Activated CD4-positive, alpha-beta T cell treated with anti-CD3 and anti-CD28 coated beads for 36 hours (primary cell): ENCODE measurements at regions of chr2 and their contacts with region 1.

Region 1: DNA sequence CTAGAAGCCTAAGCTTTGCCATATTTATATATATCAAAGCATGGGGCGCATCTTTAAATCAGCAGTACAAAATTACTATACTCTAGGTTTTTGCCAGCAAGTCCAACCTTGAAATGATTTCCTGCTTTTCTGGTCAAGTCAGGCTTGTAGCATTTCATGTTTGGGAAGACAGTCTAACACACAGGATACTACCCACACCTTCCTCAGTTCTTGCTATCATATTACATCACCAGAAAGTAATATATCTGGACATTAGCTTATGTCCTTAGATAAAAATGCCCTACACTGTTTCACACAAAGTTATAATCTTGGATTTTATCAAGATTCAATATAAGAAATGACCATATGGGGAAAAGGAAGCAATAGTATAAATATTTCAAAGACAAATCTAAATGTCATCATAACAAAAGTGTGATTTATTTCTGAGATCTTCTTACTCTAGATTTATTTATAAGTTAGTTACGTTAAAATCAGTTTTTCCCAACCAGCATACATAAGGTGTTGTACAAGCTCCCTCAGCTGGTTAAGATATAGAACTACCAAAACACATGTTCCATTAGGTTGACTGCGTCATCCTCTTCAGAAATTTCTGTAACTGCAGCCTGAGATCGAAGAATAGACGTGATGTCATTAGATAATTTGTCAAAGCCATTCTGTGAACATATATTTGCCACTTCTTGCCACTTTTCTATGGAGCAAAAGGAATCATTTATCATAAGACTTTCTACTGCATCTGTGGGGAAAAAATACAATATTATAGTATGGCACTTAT is 56.7 kb downstream of the CLHC1 start:
- DNase-seq: no peak
- ATAC-seq: peak; percentile 78
- H3K4me3 Mint-ChIP-seq: no peak overlapping the region
- H3K27ac Mint-ChIP-seq: no peak overlapping the region
- H3K4me1 Mint-ChIP-seq: peaks cover 8% of the 10 kb centered on the region
- H3K27me3 Mint-ChIP-seq: no peaks in the 10 kb centered on the region

Region 2: GRCh38 chr2:54665436-54665856 is 510.0 kb before region 1 on chr2:
- CTCF ChIA-PET with region 1: interaction called, 12 read pairs
- POLR2A ChIA-PET with region 1: no interaction called
- intact Hi-C with region 1: loop called (anchors 5 to 10 kb)
- DNase-seq: peak; percentile 75
- ATAC-seq: peak; percentile 92
- H3K4me3 Mint-ChIP-seq: no peak overlapping the region
- H3K27ac Mint-ChIP-seq: peak overlapping the region; percentile 80
- H3K4me1 Mint-ChIP-seq: peaks cover 3% of the 10 kb centered on the region
- H3K27me3 Mint-ChIP-seq: no peaks in the 10 kb centered on the region

Region 3: DNA sequence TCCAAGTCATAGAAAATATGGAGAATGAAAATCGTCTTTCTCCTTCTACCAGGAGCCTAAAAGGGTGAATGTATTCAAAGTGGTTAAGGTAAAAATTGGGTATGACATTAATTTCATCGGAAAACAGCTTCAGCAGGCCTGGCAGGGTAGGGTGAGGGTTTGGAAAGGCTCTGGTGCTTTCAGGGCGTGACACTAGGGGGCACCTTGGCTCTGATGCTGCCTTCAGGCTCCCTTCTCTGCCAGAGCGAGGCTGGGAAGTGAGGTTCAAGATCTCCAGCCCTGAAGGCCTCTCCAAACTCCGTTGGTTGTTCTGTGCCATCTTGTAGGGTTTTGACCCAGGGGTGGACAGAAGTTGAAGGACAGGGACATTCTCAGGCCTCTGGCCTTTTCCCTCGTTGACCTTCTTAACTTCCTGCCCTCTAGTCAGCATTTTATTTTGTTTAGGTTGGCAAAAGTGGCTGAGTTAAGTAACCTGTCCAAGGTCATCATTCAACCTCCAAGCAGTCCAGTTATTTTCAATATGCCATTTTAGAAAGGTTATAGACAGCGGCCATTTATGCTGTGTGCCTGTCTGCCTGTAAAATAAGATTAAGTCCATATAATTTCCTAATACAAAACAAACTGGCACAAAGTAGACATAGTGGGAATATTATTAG is 411.7 kb before region 1 on chr2:
- CTCF ChIA-PET with region 1: interaction called, 3 read pairs
- POLR2A ChIA-PET with region 1: no interaction called
- intact Hi-C with region 1: loop called in 1 of 2 experiments (anchors 2 kb)
- DNase-seq: peak; percentile 64
- ATAC-seq: peak; percentile 34
- H3K4me3 Mint-ChIP-seq: no peak overlapping the region
- H3K27ac Mint-ChIP-seq: no peak overlapping the region
- H3K4me1 Mint-ChIP-seq: peaks cover 13% of the 10 kb centered on the region
- H3K27me3 Mint-ChIP-seq: peaks cover 2% of the 10 kb centered on the region

Region 4: GRCh38 chr2:54838585-54839035 is 336.8 kb before region 1 on chr2:
- CTCF ChIA-PET with region 1: interaction called, 15 read pairs
- POLR2A ChIA-PET with region 1: no interaction called
- intact Hi-C with region 1: loop called in 1 of 2 experiments (anchors 2 kb)
- DNase-seq: peak; percentile 79
- ATAC-seq: peak; percentile 97
- H3K4me3 Mint-ChIP-seq: no peak overlapping the region
- H3K27ac Mint-ChIP-seq: no peak overlapping the region
- H3K4me1 Mint-ChIP-seq: no peaks in the 10 kb centered on the region
- H3K27me3 Mint-ChIP-seq: no peaks in the 10 kb centered on the region

Region 5: GRCh38 chr2:54899576-54900200 is 275.8 kb before region 1 on chr2:
- CTCF ChIA-PET with region 1: interaction called, 26 read pairs
- POLR2A ChIA-PET with region 1: no interaction called
- intact Hi-C with region 1: loop called in 1 of 2 experiments (anchors 2 kb)
- DNase-seq: no peak
- ATAC-seq: no peak
- H3K4me3 Mint-ChIP-seq: no peak overlapping the region
- H3K27ac Mint-ChIP-seq: no peak overlapping the region
- H3K4me1 Mint-ChIP-seq: peaks cover 28% of the 10 kb centered on the region
- H3K27me3 Mint-ChIP-seq: no peaks in the 10 kb centered on the region

Region 6: DNA sequence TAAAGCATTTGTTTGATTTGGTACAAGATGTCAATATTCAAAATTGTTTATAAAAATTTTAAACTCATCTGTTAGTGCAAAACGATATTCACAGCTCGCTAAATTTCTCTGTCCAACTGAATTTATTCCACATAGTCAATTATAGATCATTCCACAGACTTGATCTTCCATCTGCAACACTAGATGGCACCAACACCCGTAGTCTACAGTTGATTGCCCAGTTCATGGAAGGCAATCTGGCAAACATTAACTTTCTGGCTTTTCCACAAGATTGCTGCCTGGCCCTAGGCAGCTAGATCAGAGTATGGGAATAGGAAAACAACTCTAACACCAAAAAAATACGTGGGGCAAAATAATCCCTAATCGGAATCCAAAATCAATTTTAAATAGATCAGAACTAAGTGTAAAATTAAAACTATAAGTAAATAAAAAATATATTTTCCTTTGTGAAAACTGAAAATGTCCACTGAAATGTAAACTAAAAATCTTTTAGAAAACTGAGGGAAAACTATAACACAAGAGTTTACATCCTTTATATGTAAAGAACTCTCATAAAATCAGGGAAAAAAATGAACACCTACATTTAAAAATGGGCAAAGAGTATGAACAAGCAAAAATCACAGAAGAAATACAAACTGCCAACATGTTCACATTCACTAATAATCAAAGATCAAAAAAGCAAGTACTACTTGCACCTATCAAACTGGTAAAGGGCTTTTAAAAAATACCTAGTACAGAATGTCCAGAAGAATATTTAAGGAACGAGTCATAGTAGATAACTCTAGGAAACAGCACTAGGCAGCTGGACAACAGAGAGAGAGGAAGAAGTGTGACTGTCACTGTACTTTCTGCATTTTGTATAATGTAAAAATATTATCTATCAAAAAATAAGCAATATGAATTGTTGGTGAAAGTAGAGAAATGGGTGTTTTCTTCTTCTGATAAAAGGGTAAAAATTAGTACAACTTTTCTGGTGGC is 160.2 kb before region 1 on chr2:
- CTCF ChIA-PET with region 1: interaction called, 5 read pairs
- POLR2A ChIA-PET with region 1: no interaction called
- intact Hi-C with region 1: loop called in 1 of 2 experiments (anchors 1 kb)
- DNase-seq: peak; percentile 54
- ATAC-seq: peak; percentile 60
- H3K4me3 Mint-ChIP-seq: no peak overlapping the region
- H3K27ac Mint-ChIP-seq: no peak overlapping the region
- H3K4me1 Mint-ChIP-seq: peaks cover 34% of the 10 kb centered on the region
- H3K27me3 Mint-ChIP-seq: no peaks in the 10 kb centered on the region